RWPE1 (cell line): ENCODE measurements at regions of chr1 and their contacts with region 1.

Region 1: DNA sequence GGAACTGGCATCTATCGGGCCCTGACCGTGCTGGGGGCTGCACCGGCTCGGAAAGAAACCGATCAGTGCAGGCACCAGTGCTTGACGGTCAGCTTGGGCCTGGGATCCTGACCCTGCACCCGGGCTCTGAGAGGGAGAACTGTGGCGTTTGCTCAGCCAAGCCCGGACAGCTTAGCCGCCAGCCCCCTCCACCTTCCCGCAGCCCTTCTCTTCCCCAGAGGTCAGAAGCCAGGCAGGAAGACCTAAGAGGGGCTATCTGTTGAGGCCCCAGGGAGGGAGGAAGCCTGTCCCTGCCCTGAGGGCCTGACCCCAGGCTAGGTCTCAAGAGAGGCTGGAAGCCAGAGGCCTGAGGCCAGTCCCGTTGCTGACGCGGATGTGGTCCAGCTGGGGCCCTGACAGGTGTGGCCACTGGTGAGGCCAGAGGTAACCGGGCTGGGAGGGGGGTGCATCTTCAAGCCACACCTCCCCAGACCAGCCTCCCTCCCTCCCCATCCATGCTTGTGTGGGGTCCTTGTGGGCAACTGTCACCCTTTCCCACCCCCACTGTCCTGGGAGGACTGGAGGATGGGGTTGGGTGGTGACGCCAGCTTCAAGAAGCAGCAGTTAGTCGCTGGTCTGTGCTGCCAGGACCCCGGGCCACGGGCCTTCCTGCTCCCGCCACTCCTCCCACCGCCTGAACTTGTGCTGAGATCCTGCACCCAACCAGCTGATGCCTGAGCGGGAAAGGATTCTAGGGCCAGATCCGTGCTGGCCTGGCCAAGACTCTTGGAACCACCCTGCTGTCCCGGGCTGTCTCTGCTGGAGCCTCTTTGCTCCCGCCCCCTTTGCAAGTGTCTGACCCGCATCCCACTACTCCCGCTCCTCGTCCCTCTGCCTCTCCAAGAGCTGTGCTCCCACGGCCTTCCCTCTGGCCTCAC is 2.6 kb upstream of the DVL1 start:
- DNase-seq: no peak
- H3K27ac ChIP-seq: peak overlapping the region; percentile 64
- CTCF ChIP-seq: no peak

Region 2: GRCh38 chr1:1040004-1040991 is 311.5 kb before region 1 on chr1:
- CTCF ChIA-PET with region 1: no interaction called
- POLR2A ChIA-PET with region 1: no interaction called
- DNase-seq: peak; percentile 91
- H3K27ac ChIP-seq: peak overlapping the region; percentile 81
- CTCF ChIP-seq: peak; percentile 15; the same call in 1 of the 2 replicates

Region 3: GRCh38 chr1:1246577-1247340 is 105.0 kb before region 1 on chr1 and contains the start of gene C1QTNF12:
- CTCF ChIA-PET with region 1: no interaction called
- POLR2A ChIA-PET with region 1: no interaction called
- DNase-seq: no peak
- H3K27ac ChIP-seq: no peak within 1 kb of the TSS
- CTCF ChIP-seq: no peak

Region 4: GRCh38 chr1:1371746-1372711 is 20.3 kb after region 1 on chr1:
- CTCF ChIA-PET with region 1: interaction called, 10 read pairs
- POLR2A ChIA-PET with region 1: interaction called, 7 read pairs
- DNase-seq: no peak
- H3K27ac ChIP-seq: peak overlapping the region; percentile 90
- CTCF ChIP-seq: peak; percentile 94

Region 5: DNA sequence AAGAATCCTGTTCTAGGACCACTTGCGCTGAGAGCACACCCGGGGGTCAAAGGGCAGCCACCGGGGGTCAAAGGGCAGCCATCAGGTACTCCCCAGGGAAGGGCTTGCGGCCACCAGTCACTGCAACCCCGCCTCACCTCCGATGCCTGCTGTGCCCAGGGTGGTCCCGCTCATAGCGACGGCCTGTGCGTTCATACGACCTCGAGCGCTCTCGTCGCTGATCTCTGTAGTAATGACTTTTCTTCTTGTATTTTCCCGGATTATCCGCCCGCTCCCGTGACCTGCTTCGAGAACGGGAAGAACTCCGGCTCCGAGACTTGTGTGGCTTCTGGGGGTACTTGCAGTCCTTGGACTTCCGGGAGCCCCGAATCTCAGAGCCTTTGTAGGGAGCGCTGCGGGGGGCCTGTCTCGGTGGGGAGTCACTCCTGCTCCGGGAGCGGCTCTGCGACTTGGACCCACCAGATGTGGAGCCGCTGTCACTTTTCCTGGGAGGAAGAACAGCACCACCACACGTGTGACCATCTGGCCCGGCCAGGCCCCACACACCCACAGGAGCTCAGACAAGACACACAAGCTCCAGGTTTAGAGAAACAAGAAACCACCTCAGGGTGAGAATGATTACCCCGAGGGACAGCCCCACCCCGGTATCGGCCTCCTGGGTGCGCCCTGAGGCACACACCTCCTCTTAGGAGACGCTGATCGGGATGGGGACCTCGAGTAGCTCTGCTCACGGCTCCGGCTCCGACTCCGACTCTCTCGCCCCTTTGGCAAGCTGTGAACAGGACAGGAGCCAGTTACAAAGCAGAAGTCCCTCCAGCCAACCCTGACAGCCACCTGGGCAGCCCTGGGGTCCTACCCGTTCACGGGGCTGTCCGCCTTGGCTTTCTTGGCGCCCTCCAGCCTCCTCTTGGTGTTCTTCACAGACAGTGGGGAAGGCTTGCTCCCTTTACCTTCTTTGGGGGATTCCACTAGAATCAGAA is 35.6 kb after region 1 on chr1:
- CTCF ChIA-PET with region 1: no interaction called
- POLR2A ChIA-PET with region 1: no interaction called
- DNase-seq: no peak
- H3K27ac ChIP-seq: 0 out of 2 replicates have a peak overlapping the region, but pooled peaks have one; percentile 11
- CTCF ChIP-seq: no peak

Region 6: GRCh38 chr1:1630271-1630964 is 278.6 kb after region 1 on chr1:
- CTCF ChIA-PET with region 1: no interaction called
- POLR2A ChIA-PET with region 1: no interaction called
- DNase-seq: peak; percentile 80
- H3K27ac ChIP-seq: peak overlapping the region; percentile 45; the same call in 1 of the 2 replicates
- CTCF ChIP-seq: no peak